Body of pancreas (tissue), 4 donors: ENCODE measurements at regions of chr15 and their contacts with region 1.

Region 1: GRCh38 chr15:98523912-98524662 is 124.3 kb upstream of the IGF1R start:
- DNase-seq: no peak
- ATAC-seq: no peak
- H3K4me3 ChIP-seq: no peak overlapping the region
- H3K27ac ChIP-seq: no peak overlapping the region
- H3K4me1 ChIP-seq: peaks cover 8% of the 10 kb centered on the region
- H3K27me3 ChIP-seq: no peaks in the 10 kb centered on the region
- CTCF ChIP-seq: no peak
- POLR2A ChIP-seq: no peak

Region 2: DNA sequence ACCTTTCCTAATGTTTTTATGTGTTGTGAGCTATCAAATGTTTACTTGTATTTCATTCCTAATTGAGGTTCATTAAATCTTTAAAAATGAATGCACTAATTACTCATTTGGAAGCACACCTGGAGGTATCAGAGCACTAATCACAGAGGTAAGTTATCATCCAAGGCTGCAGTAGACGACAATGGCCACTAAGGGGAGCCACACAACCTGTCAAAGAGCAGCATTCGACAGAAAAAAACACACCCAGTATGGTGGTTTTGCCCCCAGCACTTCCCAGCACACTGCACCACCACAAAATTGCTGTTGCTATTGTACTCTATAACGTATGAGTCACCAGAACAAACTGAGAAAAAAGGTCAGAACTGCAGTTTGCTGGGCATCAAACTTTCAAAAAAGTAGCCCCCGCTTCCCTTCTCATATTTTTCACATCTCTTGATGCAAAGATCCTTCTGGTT is 81.7 kb before region 1 on chr15:
- intact Hi-C with region 1: no loop called
- DNase-seq: peak; percentile 70 to 85 (median 70)
- ATAC-seq: peak; percentile 58
- H3K4me3 ChIP-seq: no peak overlapping the region
- H3K27ac ChIP-seq: no peak overlapping the region
- H3K4me1 ChIP-seq: no peaks in the 10 kb centered on the region
- H3K27me3 ChIP-seq: no peaks in the 10 kb centered on the region
- CTCF ChIP-seq: peak; percentile 51 to 85 (median 79)
- POLR2A ChIP-seq: no peak

Region 3: DNA sequence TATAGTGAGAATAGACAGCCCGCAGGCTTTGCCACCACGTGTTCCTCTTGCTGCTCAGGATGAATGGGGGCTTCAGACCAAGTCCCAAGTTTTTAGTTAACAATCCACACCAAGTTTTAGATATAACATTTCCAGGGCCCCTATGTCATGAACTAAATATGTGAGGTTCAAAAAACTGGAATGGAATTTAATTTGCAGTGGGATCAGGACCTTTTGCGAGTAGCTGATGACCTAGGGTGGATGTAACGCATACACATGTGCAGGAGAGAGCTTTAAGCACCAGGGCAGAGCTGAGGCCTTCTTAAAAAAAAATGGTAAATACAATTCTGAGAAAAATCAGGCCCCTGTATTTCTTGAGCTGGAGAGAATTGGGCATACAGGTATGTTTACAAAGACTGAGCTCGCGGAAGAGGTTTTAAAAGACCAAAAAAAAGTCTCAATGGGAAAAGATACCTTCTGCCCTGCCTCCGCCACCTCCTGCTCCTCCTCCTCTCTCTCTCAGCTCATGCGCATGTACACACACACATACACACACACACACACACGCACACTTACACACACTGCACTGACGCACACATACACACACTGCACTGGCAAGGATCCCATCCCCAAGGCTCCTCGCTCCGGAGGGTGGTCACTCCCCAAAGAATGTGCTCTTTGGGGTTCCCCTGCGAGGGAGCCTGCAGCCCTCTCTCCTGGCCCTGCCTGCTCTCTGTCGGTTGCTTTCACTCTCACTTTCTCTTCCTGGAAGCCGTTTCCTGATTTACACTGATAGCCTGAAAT is 76.0 kb after region 1 on chr15:
- intact Hi-C with region 1: no loop called
- DNase-seq: peak; percentile 61 to 74 (median 68)
- ATAC-seq: peak; percentile 68
- H3K4me3 ChIP-seq: peak overlapping the region in 1 of 2 donors; percentile 41
- H3K27ac ChIP-seq: peak overlapping the region; percentile 63 to 83 (median 80)
- H3K4me1 ChIP-seq: peaks cover 27% of the 10 kb centered on the region
- H3K27me3 ChIP-seq: no peaks in the 10 kb centered on the region
- CTCF ChIP-seq: no peak
- POLR2A ChIP-seq: peak in 2 of 3 donors; percentile 68

Region 4: DNA sequence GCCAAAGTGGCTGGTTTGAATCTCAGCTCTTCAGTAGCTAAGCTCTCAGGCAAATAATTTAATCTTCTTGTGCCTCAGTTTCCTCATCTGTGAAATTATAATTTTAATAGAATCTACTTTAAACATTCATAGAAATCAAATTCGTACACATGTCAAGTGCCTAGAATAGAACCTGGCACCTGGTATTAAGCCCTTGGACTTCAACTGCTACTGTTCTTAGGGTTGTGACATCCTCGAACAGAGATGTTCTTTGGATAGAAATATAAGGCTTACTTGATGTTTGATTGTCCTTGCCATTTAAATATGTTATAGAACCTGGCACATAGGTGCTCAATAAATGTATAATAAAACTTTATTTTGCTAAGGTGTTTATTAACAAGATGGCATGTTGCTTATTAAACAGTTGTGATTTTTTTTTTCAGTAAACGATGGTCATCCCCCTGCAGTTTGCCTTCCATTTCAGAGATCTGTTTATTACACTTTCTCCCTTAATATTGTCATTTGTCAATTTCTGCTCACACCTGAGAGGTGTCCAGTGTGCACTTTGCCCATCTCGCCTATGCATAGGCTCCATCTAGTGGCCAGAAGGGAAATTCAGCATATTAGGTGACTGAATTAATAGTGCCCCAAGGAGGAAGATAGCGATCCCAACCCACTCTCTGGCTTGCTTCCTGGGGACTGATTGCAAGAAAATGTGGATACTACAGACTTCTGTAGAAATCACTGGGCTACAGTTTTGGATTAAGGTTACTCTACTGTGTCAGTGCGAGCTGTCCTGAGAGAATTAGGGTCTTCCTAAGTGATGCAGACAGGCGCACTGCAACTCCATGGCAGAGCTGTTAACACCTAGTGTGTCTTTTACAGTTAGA is 135.0 kb after region 1 on chr15:
- intact Hi-C with region 1: loop called (anchors 5 kb)
- DNase-seq: peak; percentile 48 to 63 (median 54)
- ATAC-seq: peak; percentile 86
- H3K4me3 ChIP-seq: no peak overlapping the region
- H3K27ac ChIP-seq: peak overlapping the region in 1 of 4 donors; percentile 7
- H3K4me1 ChIP-seq: peaks cover 48% of the 10 kb centered on the region
- H3K27me3 ChIP-seq: no peaks in the 10 kb centered on the region
- CTCF ChIP-seq: peak; percentile 75 to 88 (median 81)
- POLR2A ChIP-seq: no peak

Region 5: DNA sequence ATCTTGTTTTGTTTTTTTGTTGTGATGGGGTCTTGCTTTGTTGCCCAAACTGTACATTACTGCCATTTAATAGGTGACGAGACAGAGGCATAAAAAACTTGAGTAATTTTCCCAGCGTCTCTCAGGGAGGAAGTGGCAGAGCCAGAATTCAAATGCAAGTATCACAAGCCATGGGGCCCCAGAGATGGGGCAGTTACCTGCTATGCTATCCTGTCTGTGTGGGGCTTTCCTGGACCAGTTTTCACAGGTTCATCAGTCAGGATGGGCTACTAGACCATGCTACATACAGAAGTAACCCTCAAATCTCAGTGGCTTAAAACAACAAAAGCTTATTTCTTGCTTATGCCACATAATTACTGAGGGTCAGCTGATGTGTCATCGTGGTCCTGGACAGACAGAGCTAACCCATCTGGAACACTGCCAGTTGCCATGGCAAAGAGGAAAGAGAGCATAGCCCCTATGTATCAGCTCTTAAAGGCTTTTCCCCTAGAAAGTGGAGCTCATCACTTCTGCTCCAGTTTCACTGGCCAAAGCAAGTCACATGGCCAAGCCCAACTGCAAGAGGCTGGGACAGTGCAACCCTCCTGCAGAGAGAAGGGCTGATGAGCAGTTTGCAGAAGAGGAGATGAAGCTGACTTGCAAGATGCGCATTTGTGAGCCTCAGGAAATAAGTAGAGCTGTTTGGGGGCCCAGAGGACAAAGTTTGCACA is 549.1 kb after region 1 on chr15:
- intact Hi-C with region 1: loop called (anchors 5 kb)
- DNase-seq: no peak
- ATAC-seq: no peak
- H3K4me3 ChIP-seq: no peak overlapping the region
- H3K27ac ChIP-seq: no peak overlapping the region
- H3K4me1 ChIP-seq: peaks cover 4% of the 10 kb centered on the region
- H3K27me3 ChIP-seq: no peaks in the 10 kb centered on the region
- CTCF ChIP-seq: no peak
- POLR2A ChIP-seq: no peak